ENCODE measurements at regions of chr16 and their contacts with region 1.

Region 1: DNA sequence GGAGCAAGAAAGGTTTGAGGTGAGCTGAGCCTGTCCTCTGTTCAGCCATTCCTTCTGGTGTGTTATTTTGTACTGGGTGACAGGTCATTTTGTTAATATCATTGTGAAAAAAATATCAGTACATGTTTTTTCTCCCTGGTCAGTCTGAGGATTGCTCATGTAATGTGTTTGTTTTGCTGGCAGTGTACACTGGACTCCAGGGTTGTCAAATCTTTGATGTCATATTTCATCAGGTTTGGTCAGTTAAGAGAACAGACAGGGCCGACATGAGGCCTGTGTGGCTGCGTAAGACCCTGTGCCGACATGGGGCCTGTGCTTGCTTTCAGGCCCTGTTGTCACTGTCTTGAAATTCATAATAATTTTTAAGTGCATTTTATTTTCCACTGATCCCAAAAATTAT is 22.5 kb downstream of the CLUAP1 start:
- DNase-seq: no peak
- ATAC-seq: no peak
- H3K4me3 ChIP-seq: no peak overlapping the region
- H3K27ac ChIP-seq: no peak overlapping the region
- H3K4me1 ChIP-seq: no peaks in the 10 kb centered on the region
- H3K27me3 ChIP-seq: no peaks in the 10 kb centered on the region
- CTCF ChIP-seq: no peak

Region 2: GRCh38 chr16:3134564-3135417 is 388.5 kb before region 1 on chr16 and contains the start of gene ZNF213:
- CTCF ChIA-PET with region 1: interaction called, 11 read pairs
- POLR2A ChIA-PET with region 1: no interaction called
- in situ Hi-C with region 1: no loop called
- intact Hi-C with region 1: no loop called
- DNase-seq: peak; percentile 93
- ATAC-seq: peak; percentile 97
- H3K4me3 ChIP-seq: peak within 1 kb of the TSS; percentile 100
- H3K27ac ChIP-seq: peak within 1 kb of the TSS; percentile 99
- H3K4me1 ChIP-seq: peaks cover 7% of the 10 kb centered on the region; the same call in 1 of the 2 replicates
- H3K27me3 ChIP-seq: no peaks in the 10 kb centered on the region
- CTCF ChIP-seq: no peak
- total RNA-seq, gene ZNF213: 12.3 TPM

Region 3: DNA sequence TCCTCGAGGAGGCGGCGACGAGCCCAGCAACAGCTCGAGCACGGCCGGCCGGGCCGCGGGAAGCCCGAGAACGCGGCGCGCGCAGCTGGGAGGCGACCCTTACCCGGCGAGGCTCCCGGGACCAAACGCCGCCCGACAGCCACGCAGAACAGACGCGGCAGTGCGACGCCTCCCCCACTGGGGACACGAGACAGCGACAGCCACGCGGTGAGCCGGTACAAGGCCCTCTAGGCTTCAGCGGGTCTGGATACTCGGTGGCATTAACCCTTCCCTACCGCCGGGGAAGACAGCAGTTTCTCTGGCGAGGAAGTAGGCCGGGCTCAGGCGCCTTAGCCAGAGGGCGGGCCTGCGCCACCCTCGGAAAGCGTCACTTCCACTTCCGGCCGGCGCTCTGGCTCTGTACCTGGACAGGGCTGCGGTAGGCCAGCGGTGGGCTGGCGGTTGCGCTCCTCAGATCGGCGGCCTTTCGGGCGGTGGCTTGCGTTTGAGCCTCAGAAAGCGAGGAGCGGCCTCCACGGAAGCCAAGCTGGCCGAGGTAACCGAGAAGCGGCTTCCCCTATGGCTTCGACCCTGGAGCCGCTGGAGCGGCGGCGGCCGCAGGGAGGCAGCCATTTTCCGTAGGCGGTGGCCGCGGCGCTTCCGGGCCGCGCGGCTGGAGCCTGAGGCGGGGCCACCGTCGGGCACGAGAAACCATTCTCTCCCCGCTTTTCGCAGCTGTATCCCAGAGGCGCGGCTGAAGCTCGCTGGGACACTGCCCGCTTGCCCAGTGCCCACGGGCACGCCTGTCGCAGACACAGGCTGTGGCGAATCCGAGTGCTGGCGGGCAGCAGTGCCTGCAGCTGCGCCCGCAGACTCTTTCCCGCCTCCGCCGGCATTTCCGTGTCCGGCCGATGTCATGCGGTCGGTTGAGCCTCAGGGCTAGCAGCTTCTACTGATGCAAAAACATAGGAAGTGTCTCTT is 217.9 kb before region 1 on chr16 and contains the starts of genes TIGD7 and ZNF75A:
- CTCF ChIA-PET with region 1: no interaction called
- POLR2A ChIA-PET with region 1: no interaction called
- in situ Hi-C with region 1: no loop called
- intact Hi-C with region 1: no loop called
- DNase-seq: peak; percentile 46
- ATAC-seq: peak; percentile 100
- H3K4me3 ChIP-seq: peak within 1 kb of the TSS; percentile 63 to 72
- H3K27ac ChIP-seq: peak within 1 kb of the TSS; percentile 89
- H3K4me1 ChIP-seq: no peaks in the 10 kb centered on the region; the same call in 1 of the 2 replicates
- H3K27me3 ChIP-seq: no peaks in the 10 kb centered on the region
- CTCF ChIP-seq: no peak
- total RNA-seq, gene TIGD7: 4.5 TPM
- total RNA-seq, gene ZNF75A: 24.5 TPM